ENCODE measurements at regions of chr13 and their contacts with region 1.

Region 1: DNA sequence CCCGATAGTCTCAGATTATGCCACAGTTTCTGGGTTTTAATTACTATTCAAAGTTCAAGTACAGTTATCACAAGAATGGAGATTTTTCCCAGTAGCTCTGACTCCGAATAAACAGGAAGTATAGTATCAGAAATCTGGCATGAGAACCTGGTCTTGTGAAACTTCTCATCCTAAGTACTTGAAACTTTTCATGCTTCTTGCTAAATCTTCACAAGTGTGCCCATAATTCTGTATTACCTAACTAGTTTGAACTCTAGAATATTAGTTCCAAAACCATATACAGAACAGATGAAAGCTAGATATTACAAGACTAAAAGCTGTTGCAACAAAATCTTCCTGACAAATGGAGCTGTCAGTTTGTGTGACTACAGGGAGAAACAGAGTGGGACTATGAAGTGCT is 70.5 kb upstream of the CSNK1A1L start:
- DNase-seq: no peak
- H3K4me3 Mint-ChIP-seq: no peak overlapping the region
- H3K27ac Mint-ChIP-seq: no peak overlapping the region
- H3K4me1 Mint-ChIP-seq: no peaks in the 10 kb centered on the region
- H3K27me3 Mint-ChIP-seq: no peaks in the 10 kb centered on the region

Region 2: GRCh38 chr13:37118016-37118415 is 58.0 kb before region 1 on chr13:
- intact Hi-C with region 1: loop called (anchors 10 kb)
- DNase-seq: no peak
- H3K4me3 Mint-ChIP-seq: no peak overlapping the region
- H3K27ac Mint-ChIP-seq: no peak overlapping the region
- H3K4me1 Mint-ChIP-seq: no peaks in the 10 kb centered on the region
- H3K27me3 Mint-ChIP-seq: no peaks in the 10 kb centered on the region

Region 3: GRCh38 chr13:37403776-37404528 is 228.0 kb after region 1 on chr13:
- intact Hi-C with region 1: no loop called
- DNase-seq: no peak
- H3K4me3 Mint-ChIP-seq: no peak overlapping the region
- H3K27ac Mint-ChIP-seq: no peak overlapping the region
- H3K4me1 Mint-ChIP-seq: no peaks in the 10 kb centered on the region
- H3K27me3 Mint-ChIP-seq: no peaks in the 10 kb centered on the region

Region 4: GRCh38 chr13:38045307-38046048 is 869.5 kb after region 1 on chr13:
- intact Hi-C with region 1: no loop called
- DNase-seq: no peak
- H3K4me3 Mint-ChIP-seq: no peak overlapping the region
- H3K27ac Mint-ChIP-seq: no peak overlapping the region
- H3K4me1 Mint-ChIP-seq: no peaks in the 10 kb centered on the region
- H3K27me3 Mint-ChIP-seq: no peaks in the 10 kb centered on the region